ENCODE measurements at regions of chr4 and their contacts with region 1.

Region 1: DNA sequence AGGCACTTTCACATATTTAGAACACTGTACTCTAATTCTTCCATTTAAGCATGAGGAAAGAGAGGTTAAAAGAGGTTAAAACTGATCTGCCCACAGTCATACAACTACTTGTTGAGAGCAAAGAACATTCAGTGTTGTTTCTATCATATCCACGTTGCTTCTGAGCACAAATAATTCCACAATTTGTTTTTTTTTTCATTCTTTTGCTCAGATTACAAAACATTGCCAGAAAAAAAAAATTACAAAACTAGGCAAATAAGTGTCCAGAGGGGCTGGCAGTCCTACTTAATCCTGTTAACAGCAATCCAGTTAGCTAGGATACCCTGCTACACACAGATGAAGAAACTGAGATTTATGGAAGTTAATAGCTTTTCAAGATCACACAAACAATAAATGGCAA is 6.3 kb upstream of the USP53 start:
- DNase-seq: no peak
- ATAC-seq: no peak
- H3K4me3 ChIP-seq: no peak overlapping the region
- H3K4me3 Mint-ChIP-seq: peak overlapping the region; percentile 26
- H3K27ac ChIP-seq: no peak overlapping the region
- H3K27ac Mint-ChIP-seq: peak overlapping the region; percentile 1
- H3K4me1 ChIP-seq: no peaks in the 10 kb centered on the region
- H3K4me1 Mint-ChIP-seq: peaks cover 55% of the 10 kb centered on the region
- H3K27me3 ChIP-seq: no peaks in the 10 kb centered on the region
- H3K27me3 Mint-ChIP-seq: no peaks in the 10 kb centered on the region
- CTCF ChIP-seq: no peak

Region 2: GRCh38 chr4:119184128-119184527 is 22.1 kb before region 1 on chr4:
- CTCF ChIA-PET with region 1: no interaction called
- POLR2A ChIA-PET with region 1: no interaction called
- intact Hi-C with region 1: loop called (anchors 1 kb)
- DNase-seq: no peak
- ATAC-seq: no peak
- H3K4me3 ChIP-seq: no peak overlapping the region
- H3K4me3 Mint-ChIP-seq: no peak overlapping the region
- H3K27ac ChIP-seq: no peak overlapping the region
- H3K27ac Mint-ChIP-seq: no peak overlapping the region
- H3K4me1 ChIP-seq: no peaks in the 10 kb centered on the region
- H3K4me1 Mint-ChIP-seq: no peaks in the 10 kb centered on the region
- H3K27me3 ChIP-seq: peaks cover 0 to 3% (median 0%) of the 10 kb centered on the region in 4 experiments
- H3K27me3 Mint-ChIP-seq: peaks cover 8% of the 10 kb centered on the region
- CTCF ChIP-seq: no peak

Region 3: GRCh38 chr4:119678761-119679160 is 472.6 kb after region 1 on chr4:
- CTCF ChIA-PET with region 1: no interaction called
- POLR2A ChIA-PET with region 1: no interaction called
- intact Hi-C with region 1: no loop called
- DNase-seq: no peak
- ATAC-seq: no peak
- H3K4me3 ChIP-seq: no peak overlapping the region
- H3K4me3 Mint-ChIP-seq: no peak overlapping the region
- H3K27ac ChIP-seq: no peak overlapping the region
- H3K27ac Mint-ChIP-seq: no peak overlapping the region
- H3K4me1 ChIP-seq: no peaks in the 10 kb centered on the region
- H3K4me1 Mint-ChIP-seq: no peaks in the 10 kb centered on the region
- H3K27me3 ChIP-seq: no peaks in the 10 kb centered on the region
- H3K27me3 Mint-ChIP-seq: peaks cover 3% of the 10 kb centered on the region
- CTCF ChIP-seq: no peak

Region 4: GRCh38 chr4:120277391-120277790 is 1071.2 kb after region 1 on chr4:
- CTCF ChIA-PET with region 1: no interaction called
- POLR2A ChIA-PET with region 1: no interaction called
- intact Hi-C with region 1: no loop called
- DNase-seq: no peak
- ATAC-seq: no peak
- H3K4me3 ChIP-seq: no peak overlapping the region
- H3K4me3 Mint-ChIP-seq: no peak overlapping the region
- H3K27ac ChIP-seq: no peak overlapping the region
- H3K27ac Mint-ChIP-seq: no peak overlapping the region
- H3K4me1 ChIP-seq: no peaks in the 10 kb centered on the region
- H3K4me1 Mint-ChIP-seq: no peaks in the 10 kb centered on the region
- H3K27me3 ChIP-seq: no peaks in the 10 kb centered on the region
- H3K27me3 Mint-ChIP-seq: no peaks in the 10 kb centered on the region
- CTCF ChIP-seq: no peak

Measured in B cell (primary cell).